Natural killer cell (primary cell): ENCODE measurements at regions of chr10 and their contacts with region 1.

Region 1: DNA sequence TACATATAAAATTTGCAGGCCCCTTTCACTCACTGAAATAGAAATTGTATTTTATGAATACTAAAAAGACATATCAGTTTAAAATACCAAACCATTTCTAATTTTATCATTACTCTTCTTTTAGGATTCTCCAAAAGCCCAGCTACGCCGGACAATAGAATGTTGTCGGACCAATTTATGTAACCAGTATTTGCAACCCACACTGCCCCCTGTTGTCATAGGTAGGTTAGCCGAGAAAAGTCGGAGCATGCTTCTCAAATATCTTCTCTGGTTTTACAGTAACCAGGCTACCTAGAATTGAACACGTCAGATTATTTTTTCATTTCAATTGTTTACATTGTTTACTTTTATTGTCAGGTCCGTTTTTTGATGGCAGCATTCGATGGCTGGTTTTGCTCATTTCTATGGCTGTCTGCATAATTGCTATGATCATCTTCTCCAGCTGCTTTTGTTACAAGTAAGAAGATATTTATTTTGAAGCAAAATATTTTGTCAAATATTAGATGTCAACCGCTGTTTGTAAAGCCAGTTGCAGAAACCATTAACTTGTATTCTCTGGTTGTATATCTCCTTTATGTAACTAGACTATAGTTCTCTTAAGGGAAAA is 57.6 kb downstream of the MMRN2 start:
- DNase-seq: peak in 1 of 2 donors; percentile 69
- ATAC-seq: peak in 1 of 3 donors; percentile 66
- H3K4me3 ChIP-seq: no peak overlapping the region
- H3K4me3 Mint-ChIP-seq: no peak overlapping the region
- H3K27ac ChIP-seq: no peak overlapping the region
- H3K27ac Mint-ChIP-seq: no peak overlapping the region
- H3K4me1 ChIP-seq: no peaks in the 10 kb centered on the region
- H3K4me1 Mint-ChIP-seq: peaks cover 0 to 10% of the 10 kb centered on the region in 2 donors
- H3K27me3 ChIP-seq: no peaks in the 10 kb centered on the region
- H3K27me3 Mint-ChIP-seq: peaks cover 0 to 9% of the 10 kb centered on the region in 2 donors
- CTCF ChIP-seq: peak; percentile 65

Region 2: GRCh38 chr10:86688398-86688921 is 211.3 kb before region 1 on chr10:
- intact Hi-C with region 1: loop called (anchors 1 kb)
- DNase-seq: peak; percentile 28 to 77
- ATAC-seq: peak; percentile 64 to 95 (median 90)
- H3K4me3 ChIP-seq: no peak overlapping the region
- H3K4me3 Mint-ChIP-seq: no peak overlapping the region
- H3K27ac ChIP-seq: no peak overlapping the region
- H3K27ac Mint-ChIP-seq: no peak overlapping the region
- H3K4me1 ChIP-seq: no peaks in the 10 kb centered on the region
- H3K4me1 Mint-ChIP-seq: peaks cover 0 to 10% of the 10 kb centered on the region in 2 donors
- H3K27me3 ChIP-seq: no peaks in the 10 kb centered on the region
- H3K27me3 Mint-ChIP-seq: no peaks in the 10 kb centered on the region
- CTCF ChIP-seq: peak; percentile 80